ENCODE measurements at regions of chr16 and their contacts with region 1.

Region 1: DNA sequence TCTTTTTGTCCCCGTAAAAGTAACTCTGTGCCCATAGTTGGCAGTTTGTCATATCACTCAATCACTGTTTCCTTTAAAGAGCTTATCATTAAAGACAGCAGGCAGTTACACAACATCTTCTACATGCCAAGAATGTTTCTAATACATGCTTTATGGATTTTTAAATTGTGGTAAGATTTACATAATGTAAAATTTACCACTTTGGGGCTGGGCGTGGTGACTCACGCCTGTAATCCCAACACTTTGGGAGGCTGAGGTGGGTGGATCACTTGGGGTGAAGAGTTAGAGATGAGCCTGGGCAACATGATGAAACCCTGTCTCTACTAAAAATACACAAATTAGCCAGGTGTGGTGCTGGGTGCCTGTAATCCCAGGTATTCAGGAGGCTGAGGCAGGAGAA is 687.2 kb downstream of the WWOX start:
- DNase-seq: no peak
- ATAC-seq: no peak
- H3K4me3 ChIP-seq: no peak overlapping the region
- H3K27ac ChIP-seq: no peak overlapping the region
- H3K4me1 ChIP-seq: no peaks in the 10 kb centered on the region
- H3K27me3 ChIP-seq: no peaks in the 10 kb centered on the region
- CTCF ChIP-seq: no peak
- POLR2A ChIP-seq: no peak

Region 2: GRCh38 chr16:78844682-78845081 is 58.0 kb after region 1 on chr16:
- intact Hi-C with region 1: loop called in 1 of 10 experiments (anchors 10 kb)
- DNase-seq: peak in 4 of 5 donors; percentile 12 to 38 (median 27)
- ATAC-seq: peak; percentile 77 to 88 (median 87)
- H3K4me3 ChIP-seq: no peak overlapping the region
- H3K27ac ChIP-seq: peak overlapping the region in 1 of 12 donors; percentile 8
- H3K4me1 ChIP-seq: peaks cover 0 to 26% (median 11%) of the 10 kb centered on the region in 12 donors
- H3K27me3 ChIP-seq: no peaks in the 10 kb centered on the region
- CTCF ChIP-seq: no peak
- POLR2A ChIP-seq: no peak

Measured in heart left ventricle (tissue), 16 donors.